Mammary epithelial cell (primary cell): ENCODE measurements at regions of chr12 and their contacts with region 1.

Region 1: GRCh38 chr12:14417715-14418114 is 52.2 kb downstream of the ATF7IP start:
- DNase-seq: peak; percentile 74
- H3K4me3 ChIP-seq: no peak overlapping the region
- H3K27ac ChIP-seq: no peak overlapping the region
- H3K4me1 ChIP-seq: peaks cover 10% of the 10 kb centered on the region
- H3K27me3 ChIP-seq: no peaks in the 10 kb centered on the region
- CTCF ChIP-seq: no peak

Region 2: GRCh38 chr12:14185427-14186192 is 232.1 kb before region 1 on chr12:
- CTCF ChIA-PET with region 1: interaction called, 4 read pairs
- dilution Hi-C with region 1: no loop called
- in situ Hi-C with region 1: no loop called
- intact Hi-C with region 1: loop called (anchors 1 kb)
- DNase-seq: peak; percentile 37
- H3K4me3 ChIP-seq: no peak overlapping the region
- H3K27ac ChIP-seq: no peak overlapping the region
- H3K4me1 ChIP-seq: no peaks in the 10 kb centered on the region
- H3K27me3 ChIP-seq: no peaks in the 10 kb centered on the region
- CTCF ChIP-seq: peak; percentile 69 to 80

Region 3: DNA sequence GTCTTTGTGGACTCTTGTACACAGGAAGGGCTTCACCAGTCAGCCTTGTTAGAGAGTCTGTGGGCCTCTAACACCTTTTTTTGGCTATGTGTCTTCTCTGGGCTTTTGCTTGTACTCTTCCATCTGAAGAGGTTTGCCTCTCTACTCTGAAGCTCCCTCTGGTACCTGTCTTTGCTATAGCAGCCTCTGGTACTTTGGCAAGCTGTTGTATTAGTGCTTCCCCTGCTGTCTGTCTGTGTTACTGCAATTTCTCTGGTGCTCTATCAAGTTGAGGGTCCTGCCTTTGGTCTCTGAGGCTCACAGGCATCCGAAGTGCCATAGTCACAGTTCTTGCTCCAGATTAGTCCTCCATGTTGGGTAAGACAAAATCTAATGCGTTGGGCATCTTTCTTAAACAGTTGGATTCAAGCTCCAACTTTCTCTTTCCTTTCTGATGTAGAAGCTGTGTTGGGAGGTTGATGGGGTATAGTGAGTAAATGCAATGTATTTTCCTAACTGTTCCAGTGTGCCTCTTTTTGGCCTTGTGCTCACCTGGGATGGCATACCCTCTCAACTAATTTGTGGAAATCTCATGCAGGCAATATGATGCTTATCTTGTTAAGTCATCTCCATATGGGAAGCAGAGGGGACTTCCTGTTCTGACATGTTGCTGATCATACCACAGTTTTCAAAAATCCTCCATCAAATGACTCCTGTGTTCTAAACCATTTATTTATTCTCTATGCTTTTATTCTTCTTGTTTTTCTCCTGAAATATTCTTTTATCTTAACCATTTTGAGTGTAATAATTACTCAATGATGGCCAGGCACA is 36.6 kb after region 1 on chr12:
- CTCF ChIA-PET with region 1: interaction called, 25 read pairs
- dilution Hi-C with region 1: no loop called
- in situ Hi-C with region 1: no loop called
- intact Hi-C with region 1: no loop called
- DNase-seq: peak; percentile 44
- H3K4me3 ChIP-seq: no peak overlapping the region
- H3K27ac ChIP-seq: no peak overlapping the region
- H3K4me1 ChIP-seq: no peaks in the 10 kb centered on the region
- H3K27me3 ChIP-seq: no peaks in the 10 kb centered on the region
- CTCF ChIP-seq: peak; percentile 75 to 77

Region 4: DNA sequence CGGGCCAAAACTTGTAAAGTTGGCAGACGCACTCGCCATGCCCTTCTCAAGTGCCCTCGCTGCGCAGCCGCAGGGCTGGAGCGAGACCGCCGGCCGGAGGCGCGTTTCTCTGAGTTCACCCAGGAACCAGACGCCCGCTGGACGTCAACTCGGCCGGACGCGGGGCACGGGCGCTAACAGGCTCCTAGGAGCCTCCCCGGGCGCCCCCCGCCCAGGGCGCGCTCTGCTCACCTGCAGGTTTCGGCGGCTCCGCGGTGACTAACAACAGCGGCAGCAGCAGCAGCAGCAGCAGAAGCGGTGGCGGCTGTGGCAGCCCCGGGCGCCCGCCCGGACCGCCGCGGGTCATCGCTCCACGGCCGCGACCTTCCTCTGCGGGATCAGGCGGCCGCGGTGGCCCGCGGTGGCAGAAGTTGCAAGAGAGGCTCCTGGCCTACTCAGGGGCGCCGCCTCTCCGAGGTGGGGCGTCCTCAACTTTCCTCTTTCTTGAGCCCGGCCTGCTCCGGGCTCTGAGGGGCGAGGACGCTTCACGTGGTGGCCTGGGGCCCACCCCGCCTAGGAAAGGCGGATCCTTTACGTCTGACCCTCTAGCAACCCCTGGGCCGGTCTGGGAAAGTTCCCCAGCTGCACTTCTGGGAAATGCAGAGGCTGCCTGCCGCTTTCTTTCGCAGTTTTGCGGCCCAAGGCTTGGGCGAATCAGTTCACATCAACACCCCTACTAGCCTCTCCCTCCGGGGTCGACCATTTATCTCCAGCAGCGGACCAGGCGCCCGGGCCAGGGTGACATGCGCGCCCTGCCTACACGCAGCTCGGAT is 149.8 kb after region 1 on chr12 and contains the start of gene PLBD1:
- CTCF ChIA-PET with region 1: no interaction called
- dilution Hi-C with region 1: no loop called
- in situ Hi-C with region 1: no loop called
- intact Hi-C with region 1: no loop called
- DNase-seq: peak; percentile 27
- H3K4me3 ChIP-seq: peak within 1 kb of the TSS; percentile 15 to 43 (median 39)
- H3K27ac ChIP-seq: no peak within 1 kb of the TSS
- H3K4me1 ChIP-seq: no peaks in the 10 kb centered on the region
- H3K27me3 ChIP-seq: peaks cover 6% of the 10 kb centered on the region
- CTCF ChIP-seq: no peak
- total RNA-seq, gene PLBD1: not detected